ENCODE measurements at regions of chr12 and their contacts with region 1.

Region 1: DNA sequence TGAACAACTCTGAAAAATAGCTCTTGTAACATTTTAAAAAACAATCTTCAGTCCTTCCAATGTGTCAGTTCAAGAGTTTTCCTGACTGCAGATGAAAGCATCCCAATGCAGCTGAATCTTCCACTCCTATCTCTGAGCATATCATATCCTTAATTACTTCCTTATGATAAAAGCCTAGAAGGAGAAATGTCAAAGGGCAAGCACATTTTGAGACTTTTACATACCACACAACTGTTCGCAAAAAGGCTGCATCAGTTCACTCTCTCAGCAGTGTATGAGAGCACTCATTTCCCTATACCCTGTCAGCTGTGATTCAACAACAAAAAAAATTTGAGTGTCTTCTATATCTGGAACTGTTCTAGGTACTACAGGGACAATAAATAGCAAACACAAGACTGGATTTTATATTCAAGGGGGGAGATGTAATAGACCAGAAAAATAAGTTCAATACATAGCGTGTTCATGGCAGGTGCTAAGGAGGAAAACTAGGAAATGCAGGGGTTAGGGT is 66.1 kb downstream of the ACADS start:
- DNase-seq: no peak
- ATAC-seq: no peak
- H3K4me3 ChIP-seq: no peak overlapping the region
- H3K27ac ChIP-seq: no peak overlapping the region
- H3K4me1 ChIP-seq: no peaks in the 10 kb centered on the region
- H3K27me3 ChIP-seq: no peaks in the 10 kb centered on the region
- CTCF ChIP-seq: no peak

Region 2: GRCh38 chr12:120761519-120761934 is 30.2 kb before region 1 on chr12:
- intact Hi-C with region 1: no loop called
- DNase-seq: no peak
- ATAC-seq: peak; percentile 78 to 87 (median 82)
- H3K4me3 ChIP-seq: peak overlapping the region; percentile 41
- H3K27ac ChIP-seq: peak overlapping the region; percentile 87
- H3K4me1 ChIP-seq: peaks cover 45% of the 10 kb centered on the region
- H3K27me3 ChIP-seq: no peaks in the 10 kb centered on the region
- CTCF ChIP-seq: no peak

Region 3: GRCh38 chr12:120825337-120825736 is 33.6 kb after region 1 on chr12:
- intact Hi-C with region 1: loop called in 1 of 2 experiments (anchors 5 kb)
- DNase-seq: no peak
- ATAC-seq: no peak
- H3K4me3 ChIP-seq: no peak overlapping the region
- H3K27ac ChIP-seq: no peak overlapping the region
- H3K4me1 ChIP-seq: peaks cover 24% of the 10 kb centered on the region
- H3K27me3 ChIP-seq: no peaks in the 10 kb centered on the region
- CTCF ChIP-seq: no peak

Region 4: DNA sequence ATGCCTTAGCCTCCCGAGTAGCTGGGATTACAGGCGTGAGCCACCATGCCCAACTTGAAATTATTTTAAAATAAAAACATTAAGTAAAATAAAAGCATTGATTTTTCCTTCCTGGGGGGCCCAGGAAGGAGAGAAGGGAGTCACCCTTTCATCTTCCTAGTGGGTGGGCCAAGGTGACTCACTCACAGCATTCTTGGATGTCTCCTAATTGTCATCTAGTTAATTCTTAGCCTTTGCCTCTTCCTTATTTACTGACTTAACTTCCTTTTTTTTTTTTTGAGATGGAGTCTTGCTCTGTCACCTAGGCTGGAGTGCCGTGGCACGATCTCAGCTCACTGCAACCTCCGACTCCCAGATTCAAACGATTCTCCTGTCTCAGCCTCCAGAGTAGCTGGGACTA is 950.0 kb after region 1 on chr12:
- intact Hi-C with region 1: no loop called
- DNase-seq: no peak
- ATAC-seq: no peak
- H3K4me3 ChIP-seq: no peak overlapping the region
- H3K27ac ChIP-seq: peak overlapping the region; percentile 76
- H3K4me1 ChIP-seq: peaks cover 13% of the 10 kb centered on the region
- H3K27me3 ChIP-seq: no peaks in the 10 kb centered on the region
- CTCF ChIP-seq: no peak

Measured in psoas muscle (tissue), 8 donors.